ENCODE measurements at regions of chr1 and their contacts with region 1.

Region 1: GRCh38 chr1:77683160-77684148 is 996 bp upstream of the ZZZ3 start:
- DNase-seq: peak; percentile 95
- ATAC-seq: peak; percentile 76
- H3K4me3 ChIP-seq: peak overlapping the region; percentile 13 to 89 (median 67)
- H3K4me3 Mint-ChIP-seq: peak overlapping the region; percentile 90
- H3K27ac ChIP-seq: peak overlapping the region; percentile 89 to 98
- H3K27ac Mint-ChIP-seq: peak overlapping the region; percentile 95
- H3K4me1 ChIP-seq: peaks cover 16 to 27% of the 10 kb centered on the region in 2 donors
- H3K4me1 Mint-ChIP-seq: peaks cover 37% of the 10 kb centered on the region
- H3K27me3 ChIP-seq: no peaks in the 10 kb centered on the region
- H3K27me3 Mint-ChIP-seq: no peaks in the 10 kb centered on the region
- CTCF ChIP-seq: peak; percentile 95

Region 2: DNA sequence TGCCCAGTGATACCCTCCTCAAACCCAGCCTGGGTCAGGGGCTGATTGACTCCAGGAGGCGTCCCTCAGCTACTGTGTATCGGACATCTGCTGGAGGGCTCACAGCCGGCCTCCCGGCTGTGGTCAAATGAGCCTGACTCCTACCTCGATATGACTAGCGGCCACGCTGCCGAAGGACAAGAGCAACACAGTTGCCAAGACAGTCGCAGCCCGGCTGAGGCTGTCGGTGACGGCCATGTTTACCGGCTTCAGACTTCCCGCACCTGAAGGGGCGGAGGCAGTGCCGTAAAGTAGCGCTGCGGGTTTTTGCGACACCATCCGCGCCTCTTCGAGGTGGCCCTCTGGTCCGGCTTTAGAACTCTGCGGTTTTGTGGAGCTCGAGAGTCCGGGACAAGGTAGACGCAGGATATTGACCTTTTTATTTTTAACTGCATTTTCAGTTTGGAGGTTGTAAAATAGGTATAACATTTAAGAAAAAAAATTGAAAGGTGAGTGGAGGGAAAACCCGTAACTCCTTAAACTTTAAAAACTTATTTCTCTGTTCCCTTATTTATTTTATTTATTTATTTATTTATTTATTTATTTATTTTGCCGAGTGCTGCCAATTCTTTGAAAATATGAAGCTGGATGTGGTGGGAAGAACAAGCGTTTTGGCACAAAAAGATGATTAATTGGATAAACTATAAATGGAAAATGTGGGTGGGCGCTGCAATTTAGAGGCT is 464.1 kb before region 1 on chr1 and contains the start of gene PIGK:
- CTCF ChIA-PET with region 1: no interaction called
- POLR2A ChIA-PET with region 1: no interaction called
- intact Hi-C with region 1: loop called (anchors 2 kb)
- DNase-seq: peak; percentile 89
- ATAC-seq: peak; percentile 96
- H3K4me3 ChIP-seq: peak within 1 kb of the TSS; percentile 85 to 94 (median 93)
- H3K4me3 Mint-ChIP-seq: peak within 1 kb of the TSS; percentile 96
- H3K27ac ChIP-seq: peak within 1 kb of the TSS; percentile 71 to 83
- H3K27ac Mint-ChIP-seq: peak within 1 kb of the TSS; percentile 91
- H3K4me1 ChIP-seq: peaks cover 9 to 11% of the 10 kb centered on the region in 2 donors
- H3K4me1 Mint-ChIP-seq: peaks cover 26% of the 10 kb centered on the region
- H3K27me3 ChIP-seq: no peaks in the 10 kb centered on the region
- H3K27me3 Mint-ChIP-seq: no peaks in the 10 kb centered on the region
- CTCF ChIP-seq: no peak
- total RNA-seq, gene PIGK: 14.9 and 16.4 TPM in 2 replicates

Region 3: GRCh38 chr1:77779529-77780281 is 96.3 kb after region 1 on chr1 and contains the start of gene MIGA1:
- CTCF ChIA-PET with region 1: no interaction called
- POLR2A ChIA-PET with region 1: interaction called, 23 read pairs
- intact Hi-C with region 1: loop called (anchors 1 kb)
- DNase-seq: peak; percentile 92
- ATAC-seq: peak; percentile 97
- H3K4me3 ChIP-seq: peak within 1 kb of the TSS; percentile 57 to 95 (median 83)
- H3K4me3 Mint-ChIP-seq: peak within 1 kb of the TSS; percentile 94
- H3K27ac ChIP-seq: peak within 1 kb of the TSS; percentile 45 to 85
- H3K27ac Mint-ChIP-seq: peak within 1 kb of the TSS; percentile 89
- H3K4me1 ChIP-seq: peaks cover 9 to 11% of the 10 kb centered on the region in 2 donors
- H3K4me1 Mint-ChIP-seq: peaks cover 28% of the 10 kb centered on the region
- H3K27me3 ChIP-seq: peaks cover 0 to 1% (median 0%) of the 10 kb centered on the region in 4 experiments
- H3K27me3 Mint-ChIP-seq: peaks cover 2% of the 10 kb centered on the region
- CTCF ChIP-seq: no peak
- total RNA-seq, gene MIGA1: 18.0 and 20.9 TPM in 2 replicates

Region 4: GRCh38 chr1:77978969-77979876 is 295.8 kb after region 1 on chr1 and contains the start of gene FUBP1:
- CTCF ChIA-PET with region 1: interaction called, 4 read pairs
- POLR2A ChIA-PET with region 1: interaction called, 11 read pairs
- intact Hi-C with region 1: loop called (anchors 1 kb)
- DNase-seq: peak; percentile 99
- ATAC-seq: peak; percentile 77
- H3K4me3 ChIP-seq: peak within 1 kb of the TSS; percentile 77 to 100 (median 96)
- H3K4me3 Mint-ChIP-seq: no peak within 1 kb of the TSS
- H3K27ac ChIP-seq: peak within 1 kb of the TSS; percentile 94 to 99
- H3K27ac Mint-ChIP-seq: no peak within 1 kb of the TSS
- H3K4me1 ChIP-seq: peaks cover 40 to 47% of the 10 kb centered on the region in 2 donors
- H3K4me1 Mint-ChIP-seq: peaks cover 38% of the 10 kb centered on the region
- H3K27me3 ChIP-seq: no peaks in the 10 kb centered on the region
- H3K27me3 Mint-ChIP-seq: no peaks in the 10 kb centered on the region
- CTCF ChIP-seq: peak; percentile 77
- total RNA-seq, gene FUBP1: 249 and 254 TPM in 2 replicates

Region 5: GRCh38 chr1:78004719-78005447 is 321.4 kb after region 1 on chr1 and contains the start of gene DNAJB4:
- CTCF ChIA-PET with region 1: no interaction called
- POLR2A ChIA-PET with region 1: no interaction called
- intact Hi-C with region 1: loop called (anchors 1 kb)
- DNase-seq: peak; percentile 91
- ATAC-seq: peak; percentile 99
- H3K4me3 ChIP-seq: peak within 1 kb of the TSS; percentile 55 to 95 (median 66)
- H3K4me3 Mint-ChIP-seq: peak within 1 kb of the TSS; percentile 85
- H3K27ac ChIP-seq: peak within 1 kb of the TSS; percentile 97 to 98
- H3K27ac Mint-ChIP-seq: peak within 1 kb of the TSS; percentile 97
- H3K4me1 ChIP-seq: peaks cover 0 to 20% of the 10 kb centered on the region in 2 donors
- H3K4me1 Mint-ChIP-seq: peaks cover 44% of the 10 kb centered on the region
- H3K27me3 ChIP-seq: no peaks in the 10 kb centered on the region
- H3K27me3 Mint-ChIP-seq: no peaks in the 10 kb centered on the region
- CTCF ChIP-seq: no peak
- total RNA-seq, gene DNAJB4: 16.2 and 17.0 TPM in 2 replicates

Measured in B cell (primary cell).